Activated T-helper 1 cell treated with anti-CD3 and anti-CD28 coated beads, Interleukin-12 subunit alpha, Interleukin-12 subunit beta, Interleukin-2, Interleukin-4 antibody, amounts not matched to agents 30 ng/mL and 10 ng/mL and 1 ng/mL, durations not matched to agents 14 hours and 24 hours and 36 hours (primary cell): ENCODE measurements at regions of chr7 and their contacts with region 1.

Region 1: GRCh38 chr7:122316467-122317388 is 12.2 kb upstream of the FEZF1 start:
- DNase-seq: no peak
- H3K4me3 Mint-ChIP-seq: no peak overlapping the region
- H3K27ac Mint-ChIP-seq: no peak overlapping the region
- H3K4me1 Mint-ChIP-seq: no peaks in the 10 kb centered on the region
- H3K27me3 Mint-ChIP-seq: peaks cover 41% of the 10 kb centered on the region

Region 2: DNA sequence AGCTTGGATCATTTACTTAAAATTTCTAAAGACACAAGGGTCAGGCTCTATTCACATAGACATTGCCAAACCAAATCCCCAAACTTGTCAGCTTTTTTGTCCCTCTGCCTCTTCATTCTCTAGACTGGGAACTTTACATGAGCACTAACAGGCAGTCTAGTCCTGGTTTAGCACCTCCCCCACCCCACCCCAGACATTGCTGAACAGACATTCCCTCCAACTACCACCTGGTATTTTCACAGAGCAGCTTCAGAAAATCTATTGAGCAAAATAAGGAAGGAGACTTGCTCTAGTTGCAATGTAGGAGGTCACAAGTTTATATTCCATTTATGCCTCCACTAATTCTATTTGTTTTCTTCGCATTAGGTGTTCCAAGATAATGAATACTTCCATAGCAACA is 115.8 kb before region 1 on chr7:
- intact Hi-C with region 1: no loop called
- DNase-seq: no peak
- H3K4me3 Mint-ChIP-seq: no peak overlapping the region
- H3K27ac Mint-ChIP-seq: no peak overlapping the region
- H3K4me1 Mint-ChIP-seq: no peaks in the 10 kb centered on the region
- H3K27me3 Mint-ChIP-seq: no peaks in the 10 kb centered on the region

Region 3: GRCh38 chr7:122303531-122304318 is 13.0 kb before region 1 on chr7:
- intact Hi-C with region 1: loop called (anchors 2 kb)
- DNase-seq: no peak
- H3K4me3 Mint-ChIP-seq: no peak overlapping the region
- H3K27ac Mint-ChIP-seq: no peak overlapping the region
- H3K4me1 Mint-ChIP-seq: no peaks in the 10 kb centered on the region
- H3K27me3 Mint-ChIP-seq: peaks cover 75% of the 10 kb centered on the region